PC-9 (cell line): ENCODE measurements at regions of chr11 and their contacts with region 1.

Region 1: DNA sequence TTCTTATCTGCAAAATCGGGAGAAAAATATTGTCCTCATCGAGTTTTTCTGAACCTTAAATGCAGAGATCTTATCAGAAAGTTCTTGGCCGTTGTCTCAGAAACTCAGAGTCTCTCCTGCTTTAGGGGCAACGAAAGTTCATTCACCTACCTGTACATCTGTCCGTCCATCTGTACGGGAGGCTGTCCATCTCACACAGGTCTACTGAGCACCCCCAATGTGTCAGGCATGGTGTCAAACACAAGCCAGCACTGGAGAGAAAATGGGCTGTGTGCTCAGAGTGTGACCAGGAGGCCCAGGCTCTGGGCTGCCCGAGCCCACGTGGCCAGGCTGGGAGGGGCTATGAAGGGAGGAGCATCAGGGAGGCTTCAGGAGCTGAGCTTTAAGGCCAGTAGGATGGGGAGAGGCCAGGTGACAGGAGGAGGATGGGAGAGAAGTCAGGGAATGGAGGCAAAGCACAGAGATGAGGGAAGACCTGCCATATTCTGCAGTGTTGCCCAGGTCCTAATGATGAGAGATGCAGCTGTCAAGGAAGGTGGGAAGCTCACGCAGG is 62.4 kb upstream of the MYEOV start:
- DNase-seq: no peak
- H3K4me3 ChIP-seq: no peak overlapping the region
- H3K27ac ChIP-seq: no peak overlapping the region
- H3K4me1 ChIP-seq: no peaks in the 10 kb centered on the region
- H3K27me3 ChIP-seq: no peaks in the 10 kb centered on the region
- CTCF ChIP-seq: no peak

Region 2: DNA sequence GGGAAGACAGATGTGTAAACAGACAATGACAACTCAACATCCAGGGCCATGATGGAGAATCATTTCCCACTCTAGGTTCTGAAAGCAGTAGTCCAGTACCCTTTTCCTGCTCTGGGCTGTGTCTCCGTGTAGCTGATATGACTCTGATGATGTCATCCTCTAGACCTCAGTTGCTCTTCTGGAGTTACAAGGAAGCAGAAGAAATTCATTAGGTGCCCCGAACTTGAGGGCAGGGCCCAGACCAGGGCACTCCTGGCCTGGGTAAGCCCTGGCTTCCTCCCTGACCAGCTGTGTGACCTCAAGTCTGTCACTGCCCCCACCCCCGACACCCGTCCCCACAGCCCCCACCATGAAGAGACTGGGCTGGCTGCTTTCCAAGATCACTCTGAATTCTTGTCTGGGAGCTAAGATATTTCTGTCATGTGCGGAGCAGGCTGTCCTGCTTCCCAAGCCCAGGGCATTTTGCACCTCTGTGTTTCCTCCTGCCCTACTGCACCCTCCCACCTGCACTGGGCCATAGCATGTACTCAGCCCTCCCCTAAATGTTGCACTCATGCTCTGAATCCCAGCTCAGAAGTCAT is 32.0 kb after region 1 on chr11:
- CTCF ChIA-PET with region 1: no interaction called
- POLR2A ChIA-PET with region 1: no interaction called
- intact Hi-C with region 1: loop called (anchors 1 kb)
- DNase-seq: no peak
- H3K4me3 ChIP-seq: no peak overlapping the region
- H3K27ac ChIP-seq: no peak overlapping the region
- H3K4me1 ChIP-seq: peaks cover 27% of the 10 kb centered on the region
- H3K27me3 ChIP-seq: no peaks in the 10 kb centered on the region
- CTCF ChIP-seq: no peak